ENCODE measurements at regions of chr17 and their contacts with region 1.

Region 1: GRCh38 chr17:46121841-46122485 is 71.3 kb downstream of the KANSL1 start:
- DNase-seq: peak in 1 of 9 experiments; percentile 46
- ATAC-seq: peak; percentile 27
- H3K4me3 ChIP-seq: no peak overlapping the region
- H3K4me3 Mint-ChIP-seq: peak overlapping the region; percentile 44
- H3K27ac ChIP-seq: peak overlapping the region in 1 of 2 experiments; percentile 47
- H3K27ac Mint-ChIP-seq: peak overlapping the region; percentile 87
- H3K4me1 ChIP-seq: peaks cover 74% of the 10 kb centered on the region
- H3K4me1 Mint-ChIP-seq: peaks cover 85% of the 10 kb centered on the region
- H3K27me3 ChIP-seq: no peaks in the 10 kb centered on the region
- H3K27me3 Mint-ChIP-seq: no peaks in the 10 kb centered on the region
- CTCF ChIP-seq: no peak

Region 2: DNA sequence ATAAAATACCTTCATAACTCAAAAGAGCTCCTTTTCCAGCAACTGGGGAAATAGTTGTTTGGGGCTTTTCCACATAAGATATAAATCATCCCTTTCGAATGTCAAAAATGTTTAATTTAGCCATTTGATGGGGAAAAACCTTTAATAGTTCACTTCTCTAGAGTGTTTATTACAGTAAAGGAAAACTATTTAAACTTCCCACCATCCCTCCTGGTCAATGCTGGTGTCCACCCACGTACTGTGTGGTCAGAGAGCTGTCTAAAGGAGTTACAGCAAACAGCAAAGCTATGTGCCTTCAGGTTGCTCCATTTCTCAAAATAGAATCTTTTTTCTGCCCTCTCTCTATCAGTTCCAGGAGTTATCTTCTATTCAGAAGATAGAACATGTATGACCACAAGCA is 37.7 kb after region 1 on chr17:
- CTCF ChIA-PET with region 1: no interaction called
- POLR2A ChIA-PET with region 1: no interaction called
- intact Hi-C with region 1: loop called (anchors 5 kb)
- DNase-seq: no peak
- ATAC-seq: no peak
- H3K4me3 ChIP-seq: no peak overlapping the region
- H3K4me3 Mint-ChIP-seq: no peak overlapping the region
- H3K27ac ChIP-seq: no peak overlapping the region
- H3K27ac Mint-ChIP-seq: no peak overlapping the region
- H3K4me1 ChIP-seq: peaks cover 94% of the 10 kb centered on the region
- H3K4me1 Mint-ChIP-seq: peaks cover 91% of the 10 kb centered on the region
- H3K27me3 ChIP-seq: no peaks in the 10 kb centered on the region
- H3K27me3 Mint-ChIP-seq: no peaks in the 10 kb centered on the region
- CTCF ChIP-seq: no peak

Measured in CD8-positive, alpha-beta T cell (primary cell).